Activated CD4-positive, alpha-beta T cell treated with anti-CD3 and anti-CD28 coated beads, Interleukin-2, amount 10 ng/mL, durations not matched to agents 24 days and 14 days (primary cell): ENCODE measurements at regions of chr3 and their contacts with region 1.

Region 1: GRCh38 chr3:15205934-15206661 is at the start of gene CAPN7:
- DNase-seq: peak; percentile 99
- H3K4me3 Mint-ChIP-seq: peak within 1 kb of the TSS; percentile 92
- H3K27ac Mint-ChIP-seq: peak within 1 kb of the TSS; percentile 93
- H3K4me1 Mint-ChIP-seq: peaks cover 18% of the 10 kb centered on the region
- H3K27me3 Mint-ChIP-seq: no peaks in the 10 kb centered on the region
- total RNA-seq, gene CAPN7: 25.4 and 29.9 TPM in 2 replicates

Region 2: GRCh38 chr3:15098503-15099363 is 107.4 kb before region 1 on chr3 and contains the start of gene RBSN:
- intact Hi-C with region 1: loop called (anchors 1 kb)
- DNase-seq: peak; percentile 99
- H3K4me3 Mint-ChIP-seq: peak within 1 kb of the TSS; percentile 90
- H3K27ac Mint-ChIP-seq: peak within 1 kb of the TSS; percentile 93
- H3K4me1 Mint-ChIP-seq: peaks cover 29% of the 10 kb centered on the region
- H3K27me3 Mint-ChIP-seq: no peaks in the 10 kb centered on the region
- total RNA-seq, gene RBSN: 13.2 and 15.0 TPM in 2 replicates

Region 3: DNA sequence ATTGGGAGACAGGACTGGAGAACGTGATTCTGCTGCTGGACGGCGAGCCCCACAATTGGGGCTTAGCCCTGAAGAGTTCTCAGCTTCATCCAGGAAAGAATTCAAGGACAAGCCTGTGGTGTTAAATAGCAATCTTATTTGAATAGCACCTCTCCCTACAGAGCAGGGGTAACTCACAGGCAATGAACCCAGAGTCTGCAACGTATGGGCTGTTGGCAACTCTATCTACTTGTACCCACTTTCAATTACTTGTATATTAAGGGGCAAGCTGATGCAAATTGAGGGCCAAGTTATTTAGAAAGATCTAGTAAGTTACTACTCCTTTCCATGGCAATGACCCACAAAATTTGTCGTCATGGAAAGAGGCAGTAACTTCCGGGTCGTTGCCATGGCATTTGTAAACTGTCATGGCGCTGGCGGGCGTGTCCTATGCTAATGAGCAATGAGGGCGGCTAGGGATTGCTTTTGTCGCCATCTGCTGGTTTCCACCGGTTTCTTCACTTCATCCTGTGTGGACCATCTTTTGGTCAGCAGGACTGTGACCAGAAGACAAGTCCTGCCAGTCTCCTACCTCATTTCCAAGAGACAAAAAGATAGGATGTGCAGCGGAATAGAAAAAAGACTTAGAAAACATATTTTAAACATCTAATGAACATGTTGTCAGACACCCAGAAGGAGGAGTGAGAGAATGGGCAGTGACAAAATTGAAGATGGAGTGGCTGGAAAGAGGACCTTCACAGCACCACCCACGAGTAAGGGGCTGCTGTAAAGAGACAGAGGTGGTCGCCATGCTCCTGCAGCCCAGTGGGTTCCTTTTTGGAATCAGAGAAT is 172.1 kb after region 1 on chr3:
- intact Hi-C with region 1: loop called (anchors 1 kb)
- DNase-seq: peak; percentile 99
- H3K4me3 Mint-ChIP-seq: no peak overlapping the region
- H3K27ac Mint-ChIP-seq: peak overlapping the region; percentile 86
- H3K4me1 Mint-ChIP-seq: peaks cover 14% of the 10 kb centered on the region
- H3K27me3 Mint-ChIP-seq: peaks cover 3% of the 10 kb centered on the region

Region 4: GRCh38 chr3:15557511-15557946 is 351.4 kb after region 1 on chr3:
- intact Hi-C with region 1: loop called (anchors 2 kb)
- DNase-seq: peak; percentile 93
- H3K4me3 Mint-ChIP-seq: no peak overlapping the region
- H3K27ac Mint-ChIP-seq: no peak overlapping the region
- H3K4me1 Mint-ChIP-seq: peaks cover 28% of the 10 kb centered on the region
- H3K27me3 Mint-ChIP-seq: no peaks in the 10 kb centered on the region

Region 5: GRCh38 chr3:15859507-15860013 is 653.5 kb after region 1 on chr3:
- intact Hi-C with region 1: loop called (anchors 5 kb)
- DNase-seq: peak; percentile 94
- H3K4me3 Mint-ChIP-seq: peak overlapping the region; percentile 92
- H3K27ac Mint-ChIP-seq: peak overlapping the region; percentile 96
- H3K4me1 Mint-ChIP-seq: peaks cover 25% of the 10 kb centered on the region
- H3K27me3 Mint-ChIP-seq: peaks cover 9% of the 10 kb centered on the region